Posterior vena cava (tissue), 2 donors: ENCODE measurements at regions of chr22 and their contacts with region 1.

Region 1: GRCh38 chr22:47928631-47929030 is 1166.2 kb downstream of the TBC1D22A start:
- DNase-seq: no peak

Region 2: GRCh38 chr22:47883757-47884156 is 44.9 kb before region 1 on chr22:
- intact Hi-C with region 1: loop called in 1 of 2 experiments (anchors 1 kb)
- DNase-seq: peak; percentile 70

Region 3: GRCh38 chr22:48886604-48887393 is 958.2 kb after region 1 on chr22:
- intact Hi-C with region 1: loop called in 1 of 2 experiments (anchors 5 kb)
- DNase-seq: peak; percentile 80